ENCODE measurements at regions of chr13 and their contacts with region 1.

Region 1: GRCh38 chr13:63636316-63636993 is 2220.8 kb upstream of the PCDH20 start:
- DNase-seq: peak; percentile 9
- ATAC-seq: peak; percentile 74
- H3K4me3 ChIP-seq: peak overlapping the region; percentile 69
- H3K27ac ChIP-seq: no peak overlapping the region
- H3K4me1 ChIP-seq: no peaks in the 10 kb centered on the region
- H3K27me3 ChIP-seq: no peaks in the 10 kb centered on the region
- CTCF ChIP-seq: peak; percentile 47; the same call in 1 of the 2 replicates

Region 2: GRCh38 chr13:62524061-62524460 is 1112.4 kb before region 1 on chr13:
- CTCF ChIA-PET with region 1: no interaction called
- POLR2A ChIA-PET with region 1: no interaction called
- intact Hi-C with region 1: loop called (anchors 10 kb)
- DNase-seq: no peak
- ATAC-seq: no peak
- H3K4me3 ChIP-seq: no peak overlapping the region
- H3K27ac ChIP-seq: no peak overlapping the region
- H3K4me1 ChIP-seq: no peaks in the 10 kb centered on the region
- H3K27me3 ChIP-seq: no peaks in the 10 kb centered on the region
- CTCF ChIP-seq: no peak

Region 3: DNA sequence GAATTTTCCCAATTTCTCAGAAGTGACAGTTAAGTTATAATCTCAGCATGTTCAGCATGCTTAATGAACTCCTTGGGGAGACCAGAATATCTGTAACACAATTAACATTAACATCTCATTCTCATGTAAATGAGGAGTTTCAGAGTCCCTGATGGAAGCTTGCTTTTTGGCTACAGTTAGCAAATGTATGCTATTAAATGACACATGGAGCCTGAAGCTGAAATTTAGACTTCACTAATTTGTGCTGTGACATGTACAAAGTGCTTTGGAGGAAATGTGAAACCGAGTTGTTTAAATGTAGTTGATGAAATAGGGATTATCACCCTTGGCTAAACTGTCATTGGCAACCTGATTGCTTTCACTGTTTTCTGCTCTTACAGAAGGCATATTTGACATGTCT is 44.2 kb after region 1 on chr13:
- CTCF ChIA-PET with region 1: no interaction called
- POLR2A ChIA-PET with region 1: no interaction called
- intact Hi-C with region 1: loop called (anchors 5 kb)
- DNase-seq: no peak
- ATAC-seq: no peak
- H3K4me3 ChIP-seq: no peak overlapping the region
- H3K27ac ChIP-seq: no peak overlapping the region
- H3K4me1 ChIP-seq: 0 out of 2 replicates have a peak, but pooled peaks cover 3% of the 10 kb centered on the region
- H3K27me3 ChIP-seq: no peaks in the 10 kb centered on the region
- CTCF ChIP-seq: no peak